ENCODE measurements at regions of chr1 and their contacts with region 1.

Region 1: DNA sequence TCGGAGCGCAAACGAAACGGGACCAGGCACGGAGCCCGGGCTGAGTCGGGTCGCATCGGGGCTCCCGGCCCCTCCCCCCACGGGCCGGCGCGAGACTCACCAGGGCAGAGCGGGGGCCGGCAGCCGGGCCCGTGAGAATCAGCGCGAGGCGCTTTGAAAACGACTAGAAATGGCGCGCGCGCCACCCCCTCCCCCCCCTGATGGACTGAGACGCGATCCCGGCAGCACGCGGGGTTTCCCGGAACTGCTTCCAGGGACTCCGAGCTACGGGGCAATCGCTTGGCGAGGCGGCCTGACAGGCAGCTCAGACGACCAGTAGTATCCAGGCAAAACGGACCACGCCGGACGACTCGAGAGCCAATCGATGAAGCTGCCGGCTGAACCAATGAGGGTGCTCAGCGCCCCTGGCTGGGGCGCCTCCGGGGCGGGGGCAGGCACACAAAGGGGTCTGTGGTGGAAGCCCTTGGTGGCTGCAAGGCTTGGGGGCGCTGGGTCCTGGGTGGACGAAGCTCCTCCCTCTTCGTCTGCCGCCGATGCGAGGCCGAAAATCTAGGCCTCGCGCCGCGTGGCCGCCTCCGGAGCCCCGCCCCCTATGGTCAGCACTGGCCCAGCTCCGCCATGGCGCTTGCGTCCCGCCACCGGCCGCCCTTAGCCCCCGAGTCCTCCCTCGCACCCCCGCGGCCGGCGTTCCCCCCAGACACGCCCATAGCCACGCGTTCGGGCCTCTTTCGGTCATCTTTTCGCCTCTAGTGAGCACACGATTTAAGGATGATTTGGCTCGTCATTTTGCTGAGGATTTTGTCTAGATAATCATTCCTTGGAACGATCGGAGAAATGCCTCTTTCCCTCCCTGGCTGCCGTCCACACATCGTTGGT is at the start of gene HNRNPR:
- DNase-seq: peak; percentile 100
- H3K4me3 ChIP-seq: peak within 1 kb of the TSS; percentile 76 to 94 (median 83)
- H3K27ac ChIP-seq: peak within 1 kb of the TSS; percentile 95 to 100 (median 96)
- H3K4me1 ChIP-seq: peaks cover 37 to 50% (median 47%) of the 10 kb centered on the region in 4 donors
- H3K27me3 ChIP-seq: no peaks in the 10 kb centered on the region
- CTCF ChIP-seq: peak in 1 of 3 experiments; percentile 23
- EP300 ChIP-seq: no peak
- POLR2A ChIP-seq: peak; percentile 87
- total RNA-seq, gene HNRNPR: 59.8 to 75.7 (median 69.4) TPM

Region 2: GRCh38 chr1:23177438-23178380 is 166.6 kb before region 1 on chr1:
- intact Hi-C with region 1: no loop called
- DNase-seq: peak; percentile 94
- H3K4me3 ChIP-seq: peak overlapping the region; percentile 64 to 70 (median 68)
- H3K27ac ChIP-seq: peak overlapping the region; percentile 90 to 94 (median 92)
- H3K4me1 ChIP-seq: peaks cover 20 to 39% (median 27%) of the 10 kb centered on the region in 4 donors
- H3K27me3 ChIP-seq: no peaks in the 10 kb centered on the region
- CTCF ChIP-seq: peak; percentile 20 to 47 (median 30)
- EP300 ChIP-seq: no peak
- POLR2A ChIP-seq: no peak

Region 3: DNA sequence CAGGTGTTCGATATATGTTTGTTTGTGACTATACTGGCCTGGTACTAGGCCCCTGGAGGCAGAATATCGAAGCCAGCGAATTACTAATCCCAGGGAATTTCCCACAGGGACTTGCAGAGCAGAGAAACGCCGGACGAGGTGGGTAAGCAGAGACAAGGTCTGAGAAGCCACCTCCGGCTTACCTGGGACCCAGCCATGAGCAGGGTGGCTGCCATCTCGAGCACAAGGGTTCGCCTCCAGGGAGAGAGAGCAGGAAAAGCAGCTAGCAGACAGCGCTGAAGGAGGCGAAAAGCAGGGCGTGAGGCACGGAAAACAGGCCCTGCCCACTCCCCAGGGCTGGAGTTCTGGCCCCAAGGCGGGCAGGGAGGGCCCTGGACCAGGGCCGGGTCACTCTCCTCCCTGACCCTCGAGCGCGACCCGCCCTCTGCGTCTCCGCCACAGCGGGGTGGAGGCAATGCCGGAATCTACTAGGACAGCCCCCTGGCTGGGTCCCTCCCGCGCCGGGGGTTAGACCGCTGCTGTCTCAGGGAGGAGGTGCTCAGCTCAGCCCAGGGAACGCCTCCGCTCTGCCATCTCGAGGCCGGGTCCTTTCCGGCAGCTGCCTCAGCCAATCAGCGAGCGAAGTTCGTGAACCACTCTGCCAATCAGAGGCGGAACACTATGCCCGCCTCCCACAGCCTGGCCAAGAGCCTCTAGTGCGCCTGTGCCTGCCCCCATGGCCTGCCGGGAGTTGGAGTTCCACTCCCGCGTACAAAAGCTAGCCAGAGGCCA is 23.6 kb after region 1 on chr1:
- intact Hi-C with region 1: loop called (anchors 1 kb)
- DNase-seq: peak; percentile 99
- H3K4me3 ChIP-seq: peak overlapping the region; percentile 70 to 84 (median 80)
- H3K27ac ChIP-seq: peak overlapping the region; percentile 90 to 99 (median 96)
- H3K4me1 ChIP-seq: peaks cover 37 to 60% (median 52%) of the 10 kb centered on the region in 4 donors
- H3K27me3 ChIP-seq: no peaks in the 10 kb centered on the region
- CTCF ChIP-seq: peak in 1 of 3 experiments; percentile 9
- EP300 ChIP-seq: no peak
- POLR2A ChIP-seq: peak; percentile 59

Region 4: GRCh38 chr1:23384302-23385058 is 40.1 kb after region 1 on chr1:
- intact Hi-C with region 1: no loop called
- DNase-seq: no peak
- H3K4me3 ChIP-seq: no peak overlapping the region
- H3K27ac ChIP-seq: peak overlapping the region in 2 of 4 donors; percentile 27 to 31
- H3K4me1 ChIP-seq: peaks cover 14 to 22% (median 19%) of the 10 kb centered on the region in 4 donors
- H3K27me3 ChIP-seq: no peaks in the 10 kb centered on the region
- CTCF ChIP-seq: no peak
- EP300 ChIP-seq: no peak
- POLR2A ChIP-seq: no peak

Region 5: DNA sequence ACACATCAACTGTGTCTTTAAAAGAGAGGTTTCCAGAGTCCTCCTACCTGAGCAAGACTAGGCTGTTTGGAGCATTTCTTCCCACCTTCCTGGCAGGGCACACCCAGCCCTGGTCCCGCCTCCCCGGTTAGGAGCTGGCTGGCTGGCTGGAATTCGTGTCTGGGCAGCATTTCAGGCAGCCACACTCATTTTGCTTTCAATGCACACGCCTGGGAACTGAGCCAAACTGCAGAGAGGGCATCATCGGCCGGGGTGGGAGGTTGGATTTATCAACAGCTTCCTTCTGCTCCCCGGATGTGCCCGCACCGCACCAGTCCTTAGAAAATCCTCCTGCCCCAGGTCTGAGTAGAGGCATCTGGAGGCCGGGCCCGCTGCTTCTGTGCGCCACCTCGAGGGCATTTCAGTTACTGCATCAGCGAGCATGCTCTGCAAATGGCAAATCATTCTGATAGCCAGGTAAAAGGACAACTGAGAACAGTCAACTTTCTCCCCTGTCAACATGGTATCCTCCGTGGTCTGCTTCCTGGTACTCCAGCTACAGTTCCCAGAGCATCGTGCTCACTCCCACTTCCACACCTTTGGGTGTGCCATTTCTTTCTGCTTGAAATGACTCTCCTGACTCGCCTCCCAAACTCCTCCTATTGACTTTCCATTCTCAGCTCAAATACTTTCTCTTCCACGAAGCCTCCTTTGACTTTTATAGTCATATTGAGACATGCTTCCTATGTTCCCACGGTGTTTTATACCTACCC is 59.6 kb after region 1 on chr1:
- intact Hi-C with region 1: loop called (anchors 2 kb)
- DNase-seq: peak; percentile 97
- H3K4me3 ChIP-seq: peak overlapping the region in 3 of 4 donors; percentile 27 to 42 (median 35)
- H3K27ac ChIP-seq: peak overlapping the region; percentile 54 to 75 (median 66)
- H3K4me1 ChIP-seq: peaks cover 31 to 49% (median 45%) of the 10 kb centered on the region in 4 donors
- H3K27me3 ChIP-seq: no peaks in the 10 kb centered on the region
- CTCF ChIP-seq: peak in 2 of 3 experiments; percentile 95 to 97
- EP300 ChIP-seq: no peak
- POLR2A ChIP-seq: no peak

Region 6: GRCh38 chr1:23417570-23417969 is 73.2 kb after region 1 on chr1:
- intact Hi-C with region 1: no loop called
- DNase-seq: no peak
- H3K4me3 ChIP-seq: no peak overlapping the region
- H3K27ac ChIP-seq: no peak overlapping the region
- H3K4me1 ChIP-seq: peaks cover 13 to 33% (median 27%) of the 10 kb centered on the region in 4 donors
- H3K27me3 ChIP-seq: no peaks in the 10 kb centered on the region
- CTCF ChIP-seq: no peak
- EP300 ChIP-seq: no peak
- POLR2A ChIP-seq: no peak

Region 7: GRCh38 chr1:23539698-23540266 is 195.4 kb after region 1 on chr1:
- intact Hi-C with region 1: loop called (anchors 10 kb)
- DNase-seq: peak; percentile 98
- H3K4me3 ChIP-seq: peak overlapping the region; percentile 4 to 22 (median 12)
- H3K27ac ChIP-seq: no peak overlapping the region
- H3K4me1 ChIP-seq: peaks cover under 1 to 17% (median 13%) of the 10 kb centered on the region in 4 donors
- H3K27me3 ChIP-seq: no peaks in the 10 kb centered on the region
- CTCF ChIP-seq: peak; percentile 91 to 95 (median 91)
- EP300 ChIP-seq: no peak
- POLR2A ChIP-seq: no peak

Measured in esophagus muscularis mucosa (tissue), 4 donors.